GM23248 (cell line): ENCODE measurements at regions of chr4 and their contacts with region 1.

Region 1: DNA sequence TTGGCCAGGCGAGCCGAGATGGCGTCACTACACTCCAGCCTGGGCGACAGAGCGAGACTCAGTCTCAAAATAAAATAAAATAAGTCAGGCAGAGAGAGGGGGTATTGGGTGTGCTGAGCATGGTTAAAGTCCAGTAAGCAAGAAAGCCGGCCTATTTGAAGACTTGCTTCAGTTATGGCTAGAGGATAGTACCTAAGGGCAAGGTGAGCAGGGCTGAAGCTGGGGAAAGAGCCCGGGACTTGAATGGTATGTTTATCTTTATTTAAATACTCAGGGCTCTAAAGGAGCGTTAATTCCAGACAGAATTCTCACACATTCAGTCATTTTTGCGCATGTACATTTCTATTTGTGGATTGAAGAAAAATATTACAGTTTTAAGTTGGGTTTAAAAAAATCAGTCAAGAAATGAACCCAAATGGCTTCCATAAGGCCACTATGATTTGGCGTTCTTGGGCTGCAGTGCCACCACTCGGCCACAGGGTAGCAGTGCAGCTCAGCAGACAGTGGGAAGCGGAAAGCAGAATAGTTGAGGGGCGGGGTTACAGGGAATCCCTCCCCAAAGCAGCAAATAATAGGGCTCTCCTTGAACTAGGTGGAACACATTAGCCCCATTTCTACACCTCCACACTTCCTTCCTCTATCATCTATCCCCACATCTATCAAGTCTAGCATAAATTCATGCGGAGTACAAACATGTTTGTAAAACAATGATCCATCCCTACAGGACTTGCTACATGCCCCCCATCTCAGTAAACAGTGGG is 37.2 kb upstream of the SH3D19 start:
- DNase-seq: peak; percentile 90
- H3K4me3 ChIP-seq: no peak overlapping the region
- H3K27ac ChIP-seq: no peak overlapping the region
- H3K4me1 ChIP-seq: no peaks in the 10 kb centered on the region
- H3K27me3 ChIP-seq: no peaks in the 10 kb centered on the region

Region 2: DNA sequence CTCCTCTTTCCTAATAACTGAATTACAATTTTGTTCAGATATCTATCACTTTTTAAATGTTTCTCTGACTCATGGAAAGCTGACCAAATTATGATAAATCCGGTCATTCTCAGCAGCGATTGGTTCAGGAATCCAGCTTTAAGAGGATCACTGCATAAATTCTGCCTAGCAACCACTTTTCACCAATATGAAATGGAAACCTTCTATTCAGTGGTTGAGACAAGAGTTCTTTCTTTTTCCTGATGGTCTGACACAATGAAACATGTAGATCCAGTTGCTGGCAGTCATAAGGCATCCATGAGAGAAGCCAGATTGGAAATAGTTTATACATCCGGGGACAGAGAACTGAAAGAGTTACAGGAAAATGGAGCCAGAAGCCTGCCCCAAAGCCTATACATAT is 753.5 kb before region 1 on chr4:
- in situ Hi-C with region 1: no loop called
- DNase-seq: no peak
- H3K4me3 ChIP-seq: no peak overlapping the region
- H3K27ac ChIP-seq: no peak overlapping the region
- H3K4me1 ChIP-seq: no peaks in the 10 kb centered on the region
- H3K27me3 ChIP-seq: no peaks in the 10 kb centered on the region

Region 3: GRCh38 chr4:150694438-150694837 is 668.1 kb before region 1 on chr4:
- in situ Hi-C with region 1: no loop called
- DNase-seq: no peak
- H3K4me3 ChIP-seq: no peak overlapping the region
- H3K27ac ChIP-seq: no peak overlapping the region
- H3K4me1 ChIP-seq: no peaks in the 10 kb centered on the region
- H3K27me3 ChIP-seq: no peaks in the 10 kb centered on the region

Region 4: DNA sequence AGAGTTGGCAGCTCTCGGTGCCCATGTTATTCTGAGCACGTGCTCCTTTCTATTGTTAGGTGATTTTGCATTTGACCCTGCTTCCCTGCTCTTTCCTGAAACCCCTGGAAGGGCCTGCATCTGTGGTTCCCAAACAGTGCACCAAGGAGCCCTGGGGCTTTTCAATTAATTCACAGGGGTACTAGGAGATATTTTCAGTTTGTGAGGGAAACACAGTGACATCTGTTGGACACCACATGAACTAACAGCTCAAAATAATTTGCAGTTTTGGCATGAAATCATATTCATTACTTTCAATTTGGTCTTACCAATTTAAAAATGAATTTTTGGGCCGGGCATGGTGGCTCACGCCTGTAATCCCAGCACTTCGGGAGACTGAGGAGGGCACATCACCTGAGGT is 241.7 kb after region 1 on chr4:
- in situ Hi-C with region 1: loop called (anchors 25 kb)
- DNase-seq: peak; percentile 57
- H3K4me3 ChIP-seq: no peak overlapping the region
- H3K27ac ChIP-seq: no peak overlapping the region
- H3K4me1 ChIP-seq: 0 out of 2 replicates have a peak, but pooled peaks cover 5% of the 10 kb centered on the region
- H3K27me3 ChIP-seq: no peaks in the 10 kb centered on the region

Region 5: DNA sequence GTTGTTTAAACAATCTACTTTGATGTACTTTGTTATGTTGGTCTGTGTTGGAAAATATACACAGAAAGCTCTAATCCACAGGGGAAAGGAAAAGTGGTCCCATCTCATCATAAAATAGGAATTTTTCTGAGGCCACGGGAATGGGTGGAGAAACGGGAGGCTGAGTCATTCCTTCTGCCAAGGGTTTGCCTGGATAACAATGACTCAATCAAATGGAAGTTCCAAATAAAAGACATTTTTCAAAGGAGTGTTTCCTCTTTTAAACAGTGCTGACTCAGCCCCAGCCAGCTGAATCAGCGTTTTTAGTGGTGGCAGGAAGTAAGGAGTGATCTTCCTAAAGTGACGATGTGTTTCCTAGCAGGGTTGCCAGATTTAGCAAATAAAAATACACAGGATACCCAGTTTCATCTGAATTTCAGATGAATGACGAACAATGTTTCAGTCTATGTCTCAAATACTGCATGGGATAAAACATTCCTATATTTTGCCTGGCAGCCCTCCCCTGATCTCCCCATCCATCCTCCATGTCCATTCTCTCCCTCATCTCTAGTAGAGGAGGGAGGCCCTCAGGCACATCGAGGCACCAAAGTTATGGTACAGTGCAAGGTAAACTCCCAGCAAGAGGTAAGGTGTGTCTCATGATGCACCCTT is 743.7 kb after region 1 on chr4:
- in situ Hi-C with region 1: no loop called
- DNase-seq: peak; percentile 97
- H3K4me3 ChIP-seq: 0 out of 2 replicates have a peak overlapping the region, but pooled peaks have one; percentile 10
- H3K27ac ChIP-seq: peak overlapping the region; percentile 76
- H3K4me1 ChIP-seq: peaks cover 25% of the 10 kb centered on the region
- H3K27me3 ChIP-seq: no peaks in the 10 kb centered on the region

Region 6: DNA sequence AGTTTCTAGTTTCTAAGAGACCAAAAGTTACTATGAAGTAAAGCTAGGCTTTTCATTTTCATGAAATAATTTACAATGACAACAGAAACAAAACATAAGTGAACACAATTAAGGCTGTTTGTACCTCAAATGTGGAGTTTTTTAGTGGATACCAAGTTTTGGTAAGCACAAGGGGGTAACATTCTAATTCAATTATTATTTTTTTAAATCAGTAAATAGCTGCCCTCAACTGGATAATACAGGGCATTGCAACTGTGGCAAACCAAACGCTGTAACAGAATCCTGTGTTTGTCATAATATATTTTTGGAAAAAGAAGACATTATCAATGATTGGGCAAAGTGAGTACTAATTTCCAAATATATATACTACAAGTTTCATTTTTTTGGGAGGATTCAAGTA is 1023.0 kb after region 1 on chr4:
- in situ Hi-C with region 1: loop called (anchors 25 kb)
- DNase-seq: peak; percentile 64
- H3K4me3 ChIP-seq: no peak overlapping the region
- H3K27ac ChIP-seq: no peak overlapping the region
- H3K4me1 ChIP-seq: peaks cover 6% of the 10 kb centered on the region; the same call in 1 of the 2 replicates
- H3K27me3 ChIP-seq: no peaks in the 10 kb centered on the region